ENCODE measurements at regions of chr6 and their contacts with region 1.

Region 1: GRCh38 chr6:117547688-117548621 is 54.4 kb downstream of the GOPC start:
- DNase-seq: peak; percentile 16
- H3K4me3 Mint-ChIP-seq: peak overlapping the region; percentile 68
- H3K27ac Mint-ChIP-seq: peak overlapping the region; percentile 64
- H3K4me1 Mint-ChIP-seq: peaks cover 41% of the 10 kb centered on the region
- H3K27me3 Mint-ChIP-seq: peaks cover 6% of the 10 kb centered on the region

Region 2: DNA sequence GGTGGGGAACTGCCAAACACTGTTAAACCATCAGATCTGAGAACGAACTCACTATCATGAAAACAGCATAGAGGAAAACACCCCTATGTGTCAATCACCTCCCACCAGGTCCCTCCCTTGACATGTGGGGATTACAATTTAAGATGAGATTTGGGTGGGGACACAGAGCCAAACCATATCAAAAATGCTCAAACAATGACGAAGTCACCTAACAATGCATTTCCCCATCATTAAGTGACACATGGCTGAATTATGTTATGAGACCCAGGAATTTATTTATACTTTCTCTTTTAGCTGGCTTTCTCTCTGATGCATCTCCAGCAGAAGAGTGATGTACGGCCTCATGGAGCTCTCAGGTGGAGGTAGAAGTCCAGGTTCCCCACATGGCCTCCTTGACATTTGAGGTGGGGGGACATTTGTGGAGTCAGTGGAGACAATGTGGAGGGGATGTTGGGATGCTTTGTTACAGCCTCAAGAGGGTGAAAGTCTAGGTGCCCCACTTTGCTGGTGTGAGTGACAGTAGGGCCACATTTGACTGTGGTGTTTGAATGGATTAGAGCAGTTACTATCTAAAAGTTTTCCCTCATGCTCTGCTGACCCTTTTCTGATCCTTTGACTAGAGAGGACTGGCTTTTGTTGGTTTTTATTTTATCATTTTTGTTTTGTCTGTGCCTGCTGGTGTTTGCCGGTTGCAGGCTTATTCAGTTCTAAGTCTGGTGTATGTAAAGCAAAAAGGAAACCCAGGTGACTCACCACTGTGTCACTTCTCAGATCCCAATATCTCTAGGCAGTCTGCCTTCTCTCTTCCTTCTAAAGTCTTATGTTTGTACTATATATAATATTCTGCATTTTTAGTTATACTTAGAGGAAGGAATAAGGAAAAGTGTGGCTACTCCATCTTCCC is 83.9 kb before region 1 on chr6:
- intact Hi-C with region 1: loop called (anchors 5 kb)
- DNase-seq: no peak
- H3K4me3 Mint-ChIP-seq: no peak overlapping the region
- H3K27ac Mint-ChIP-seq: peak overlapping the region; percentile 28
- H3K4me1 Mint-ChIP-seq: peaks cover 23% of the 10 kb centered on the region
- H3K27me3 Mint-ChIP-seq: peaks cover 14% of the 10 kb centered on the region

Region 3: GRCh38 chr6:117482240-117483003 is 65.5 kb before region 1 on chr6 and contains the start of gene DCBLD1:
- intact Hi-C with region 1: loop called (anchors 1 kb)
- DNase-seq: peak; percentile 56
- H3K4me3 Mint-ChIP-seq: peak within 1 kb of the TSS; percentile 86
- H3K27ac Mint-ChIP-seq: peak within 1 kb of the TSS; percentile 72
- H3K4me1 Mint-ChIP-seq: peaks cover 14% of the 10 kb centered on the region
- H3K27me3 Mint-ChIP-seq: peaks cover 47% of the 10 kb centered on the region
- total RNA-seq, gene DCBLD1: 4.0 and 7.5 TPM in 2 replicates

Region 4: GRCh38 chr6:117498159-117498558 is 49.8 kb before region 1 on chr6:
- intact Hi-C with region 1: loop called (anchors 5 kb)
- DNase-seq: no peak
- H3K4me3 Mint-ChIP-seq: no peak overlapping the region
- H3K27ac Mint-ChIP-seq: no peak overlapping the region
- H3K4me1 Mint-ChIP-seq: peaks cover 17% of the 10 kb centered on the region
- H3K27me3 Mint-ChIP-seq: no peaks in the 10 kb centered on the region

Region 5: DNA sequence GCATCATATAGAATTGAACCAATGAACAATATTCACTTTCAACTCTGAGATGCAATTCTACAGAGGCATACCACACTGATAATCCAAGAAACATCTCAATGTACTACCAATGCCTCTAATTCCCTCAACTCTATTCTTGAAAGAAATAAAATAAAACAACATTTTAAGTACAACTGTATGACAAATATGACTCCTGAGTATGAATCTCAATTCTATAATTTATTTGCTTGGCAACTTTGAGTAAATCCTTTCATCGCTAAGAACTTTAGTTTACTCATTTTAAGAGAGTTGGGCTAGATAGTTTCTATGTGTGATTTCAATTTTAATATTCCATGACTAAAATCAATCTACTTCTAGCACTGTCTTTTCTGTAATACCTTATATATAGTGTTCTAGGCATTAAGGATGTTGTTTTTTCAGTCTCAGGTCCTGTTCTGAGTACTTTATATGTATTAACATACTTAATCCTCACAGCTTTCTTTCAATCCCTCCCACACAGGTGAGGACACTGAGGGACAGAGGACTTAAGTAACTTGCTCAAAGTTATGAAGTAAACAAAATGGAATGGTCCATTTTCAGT is 21.0 kb after region 1 on chr6:
- intact Hi-C with region 1: loop called (anchors 2 kb)
- DNase-seq: no peak
- H3K4me3 Mint-ChIP-seq: no peak overlapping the region
- H3K27ac Mint-ChIP-seq: no peak overlapping the region
- H3K4me1 Mint-ChIP-seq: peaks cover 8% of the 10 kb centered on the region
- H3K27me3 Mint-ChIP-seq: no peaks in the 10 kb centered on the region

Measured in activated T-helper 2 cell treated with anti-CD3 and anti-CD28 coated beads, Interferon-gamma antibody, Interleukin-2, Interleukin-4, amounts not matched to agents 10 μg/mL and 5 μg/mL and 100 μg/mL, durations not matched to agents 14 hours and 24 hours and 36 hours (primary cell).